ENCODE measurements at regions of chr19 and their contacts with region 1.

Region 1: DNA sequence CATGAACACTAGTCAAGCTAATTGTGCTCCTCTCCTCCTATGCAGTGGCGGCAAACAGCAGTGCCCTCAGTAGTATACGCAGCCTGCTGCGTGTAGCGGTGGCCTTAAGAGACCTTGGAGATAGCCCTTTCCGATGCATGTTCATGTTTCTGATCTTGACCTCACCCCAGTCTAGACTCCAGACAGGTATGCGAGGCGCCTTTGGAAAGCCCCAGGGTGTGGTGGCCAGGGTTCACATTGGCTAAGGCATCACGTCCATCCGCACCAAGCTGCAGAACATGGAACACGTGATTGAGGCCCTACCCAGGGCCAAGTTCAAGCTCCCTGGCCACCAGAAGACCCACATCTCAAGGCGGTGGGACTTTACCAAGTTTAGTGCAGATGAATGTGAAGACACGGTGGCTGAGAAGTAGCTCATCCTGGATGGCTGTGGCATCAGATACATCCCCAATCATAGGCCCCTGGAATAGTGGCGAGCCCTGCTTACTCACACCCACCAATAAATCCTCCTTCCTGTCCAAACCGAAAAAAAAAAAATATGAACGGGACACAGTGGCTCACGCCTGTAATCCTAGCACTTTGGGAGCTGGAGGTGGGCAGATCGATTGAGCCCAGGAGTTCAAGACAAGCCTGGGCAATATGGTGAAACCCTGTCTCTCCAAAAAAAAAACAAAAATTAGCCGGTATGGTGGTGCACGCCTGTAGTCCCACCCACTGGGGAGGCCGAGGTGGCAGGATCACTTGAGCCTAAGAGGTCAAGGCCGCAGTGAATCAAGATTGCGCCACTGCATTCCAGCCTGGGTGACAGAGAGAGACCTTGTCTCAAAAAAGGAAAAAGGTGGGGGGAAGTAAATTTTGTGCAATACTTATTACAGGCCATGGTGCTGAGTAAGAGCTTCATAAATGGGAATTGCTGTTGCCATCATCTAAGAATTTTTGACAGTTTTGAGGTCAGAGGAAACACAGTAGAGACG is 12.4 kb upstream of the CBLC start:
- DNase-seq: no peak
- CTCF ChIP-seq: no peak

Region 2: GRCh38 chr19:44752816-44753618 is 12.2 kb before region 1 on chr19:
- CTCF ChIA-PET with region 1: interaction called, 40 read pairs
- POLR2A ChIA-PET with region 1: interaction called, 10 read pairs
- DNase-seq: peak; percentile 94
- CTCF ChIP-seq: no peak

Region 3: GRCh38 chr19:44875666-44876451 is 110.6 kb after region 1 on chr19:
- CTCF ChIA-PET with region 1: no interaction called
- POLR2A ChIA-PET with region 1: no interaction called
- DNase-seq: no peak
- CTCF ChIP-seq: no peak

Measured in GM10248 (cell line).